Right ventricle myocardium inferior (tissue), 1 donor: ENCODE measurements at regions of chr1 and their contacts with region 1.

Region 1: DNA sequence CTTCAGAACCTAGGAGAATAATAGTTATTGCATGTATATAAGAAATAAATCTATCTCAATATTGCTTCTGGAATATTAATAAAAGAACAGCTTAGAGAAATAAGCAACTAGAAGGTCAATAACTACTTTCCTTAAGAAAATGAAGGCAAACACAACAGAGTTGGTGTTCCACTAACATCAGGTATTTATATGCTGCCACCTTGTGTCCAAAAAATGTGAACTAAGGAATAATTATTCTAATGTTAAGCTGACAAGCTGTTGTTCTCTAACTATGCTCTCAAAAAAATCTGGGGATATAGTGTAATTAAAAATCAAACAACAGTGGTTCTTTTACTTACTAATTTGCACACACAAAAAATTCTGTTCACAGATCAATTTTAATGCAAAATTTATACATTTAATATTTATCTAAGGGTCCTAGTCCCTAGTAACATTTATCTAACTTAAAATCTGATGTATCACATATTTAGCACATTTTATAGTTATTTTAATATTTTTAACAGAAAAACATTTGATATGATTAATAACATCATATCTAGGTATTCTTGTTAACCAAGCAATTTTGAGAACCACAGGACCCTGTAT is 39.6 kb downstream of the UCHL5 start:
- DNase-seq: no peak
- ATAC-seq: no peak

Region 2: DNA sequence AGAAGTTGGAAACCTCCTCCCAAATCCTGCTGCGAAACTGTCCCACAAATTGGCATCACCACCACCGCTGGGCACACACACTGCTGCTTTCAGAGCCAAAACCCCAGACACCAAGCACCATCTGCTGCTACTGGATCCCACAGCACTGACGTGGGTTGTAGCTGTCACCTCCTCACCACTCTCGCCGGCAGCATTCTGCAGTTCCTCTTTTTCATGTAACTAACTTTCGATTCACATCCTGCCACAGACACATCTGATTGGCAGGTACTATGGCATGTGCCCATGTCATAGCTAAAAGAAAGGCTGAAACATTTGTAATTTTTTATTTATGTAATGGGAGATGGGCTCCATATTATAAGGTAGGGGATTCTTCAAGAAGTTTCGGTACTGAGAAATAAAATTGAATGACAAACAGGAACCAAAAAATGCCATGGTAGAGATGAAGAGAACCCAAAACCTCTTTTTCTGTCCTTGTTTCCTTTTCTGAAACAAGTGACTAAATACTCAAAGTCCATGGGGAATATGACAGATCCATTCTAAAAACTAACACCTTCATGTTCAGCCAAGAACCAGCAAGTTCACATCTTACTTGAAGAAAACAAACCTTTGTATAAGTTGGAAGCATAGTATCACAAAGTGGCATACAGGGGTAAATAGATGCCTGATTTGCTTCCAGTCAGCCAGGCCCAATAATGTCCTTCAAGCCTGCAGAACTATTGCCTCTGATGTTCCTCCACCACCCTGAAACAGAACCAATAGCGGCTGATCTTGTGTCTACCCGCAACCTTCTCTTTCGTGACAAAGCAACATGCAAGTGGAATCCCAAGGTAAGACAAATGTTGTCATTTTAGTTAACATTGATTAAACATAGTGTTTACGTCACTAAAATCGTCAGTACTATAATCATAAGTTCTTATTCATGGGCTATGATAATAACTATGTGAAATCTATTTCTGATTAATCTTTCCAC is 410.1 kb before region 1 on chr1:
- intact Hi-C with region 1: loop called (anchors 10 kb)
- DNase-seq: peak; percentile 84
- ATAC-seq: peak; percentile 57